ENCODE measurements at regions of chr12 and their contacts with region 1.

Region 1: GRCh38 chr12:71415336-71416231 is 24.0 kb upstream of the LGR5 start:
- DNase-seq: peak; percentile 33
- H3K4me3 ChIP-seq: no peak overlapping the region
- H3K27ac ChIP-seq: no peak overlapping the region
- H3K4me1 ChIP-seq: no peaks in the 10 kb centered on the region
- H3K27me3 ChIP-seq: no peaks in the 10 kb centered on the region
- CTCF ChIP-seq: peak; percentile 30 to 71 (median 66)
- POLR2A ChIP-seq: no peak

Region 2: GRCh38 chr12:71642264-71642663 is 226.7 kb after region 1 on chr12:
- intact Hi-C with region 1: loop called (anchors 10 kb)
- DNase-seq: no peak
- H3K4me3 ChIP-seq: no peak overlapping the region
- H3K27ac ChIP-seq: no peak overlapping the region
- H3K4me1 ChIP-seq: no peaks in the 10 kb centered on the region
- H3K27me3 ChIP-seq: no peaks in the 10 kb centered on the region
- CTCF ChIP-seq: no peak
- POLR2A ChIP-seq: no peak

Region 3: DNA sequence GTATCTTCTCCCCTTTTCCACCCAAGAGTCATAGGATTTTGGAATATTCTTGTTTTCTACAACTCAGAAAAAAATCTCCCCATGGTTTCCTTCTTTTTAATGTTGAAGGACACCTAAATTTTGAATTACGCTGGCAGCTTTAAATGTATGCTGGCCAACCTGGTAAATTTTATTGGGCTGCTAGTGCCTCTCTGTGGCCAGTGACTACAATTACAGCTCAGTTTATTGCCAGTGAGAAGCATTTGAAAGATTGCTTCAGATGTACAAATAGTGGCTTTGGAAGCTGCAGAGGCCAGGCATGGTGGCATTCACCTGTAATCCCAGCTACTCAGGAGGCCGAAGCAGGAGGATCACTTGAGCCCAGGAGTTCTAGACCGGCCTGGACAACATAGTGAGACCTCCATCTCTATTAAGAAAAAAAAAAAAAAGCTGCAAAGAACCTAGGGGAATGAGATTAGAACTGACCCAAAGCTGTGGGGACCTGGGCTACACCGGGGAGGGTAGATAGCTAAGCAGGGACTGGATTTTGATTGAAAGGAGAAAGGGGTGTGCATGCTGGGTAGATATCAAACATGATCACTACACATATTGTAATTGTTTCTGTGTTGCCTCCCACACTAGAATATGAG is 331.5 kb after region 1 on chr12:
- intact Hi-C with region 1: loop called (anchors 5 kb)
- DNase-seq: peak; percentile 33
- H3K4me3 ChIP-seq: no peak overlapping the region
- H3K27ac ChIP-seq: no peak overlapping the region
- H3K4me1 ChIP-seq: no peaks in the 10 kb centered on the region
- H3K27me3 ChIP-seq: no peaks in the 10 kb centered on the region
- CTCF ChIP-seq: peak in 3 of 4 experiments; percentile 53 to 82 (median 80)
- POLR2A ChIP-seq: no peak

Measured in prostate gland (tissue), 2 donors.